CD4-positive, alpha-beta T cell (primary cell): ENCODE measurements at regions of chr7 and their contacts with region 1.

Region 1: GRCh38 chr7:93231799-93232672 is at the start of gene VPS50:
- DNase-seq: peak; percentile 84 to 97 (median 88)
- ATAC-seq: peak; percentile 94
- H3K4me3 ChIP-seq: peak within 1 kb of the TSS; percentile 67
- H3K4me3 Mint-ChIP-seq: peak within 1 kb of the TSS; percentile 96
- H3K27ac ChIP-seq: peak within 1 kb of the TSS; percentile 79 to 91
- H3K27ac Mint-ChIP-seq: peak within 1 kb of the TSS; percentile 95
- H3K4me1 ChIP-seq: peaks cover 6% of the 10 kb centered on the region
- H3K4me1 Mint-ChIP-seq: peaks cover 25% of the 10 kb centered on the region
- H3K27me3 ChIP-seq: no peaks in the 10 kb centered on the region
- H3K27me3 Mint-ChIP-seq: no peaks in the 10 kb centered on the region
- CTCF ChIP-seq: no peak
- total RNA-seq, gene VPS50: 13.2 to 17.3 TPM

Region 2: DNA sequence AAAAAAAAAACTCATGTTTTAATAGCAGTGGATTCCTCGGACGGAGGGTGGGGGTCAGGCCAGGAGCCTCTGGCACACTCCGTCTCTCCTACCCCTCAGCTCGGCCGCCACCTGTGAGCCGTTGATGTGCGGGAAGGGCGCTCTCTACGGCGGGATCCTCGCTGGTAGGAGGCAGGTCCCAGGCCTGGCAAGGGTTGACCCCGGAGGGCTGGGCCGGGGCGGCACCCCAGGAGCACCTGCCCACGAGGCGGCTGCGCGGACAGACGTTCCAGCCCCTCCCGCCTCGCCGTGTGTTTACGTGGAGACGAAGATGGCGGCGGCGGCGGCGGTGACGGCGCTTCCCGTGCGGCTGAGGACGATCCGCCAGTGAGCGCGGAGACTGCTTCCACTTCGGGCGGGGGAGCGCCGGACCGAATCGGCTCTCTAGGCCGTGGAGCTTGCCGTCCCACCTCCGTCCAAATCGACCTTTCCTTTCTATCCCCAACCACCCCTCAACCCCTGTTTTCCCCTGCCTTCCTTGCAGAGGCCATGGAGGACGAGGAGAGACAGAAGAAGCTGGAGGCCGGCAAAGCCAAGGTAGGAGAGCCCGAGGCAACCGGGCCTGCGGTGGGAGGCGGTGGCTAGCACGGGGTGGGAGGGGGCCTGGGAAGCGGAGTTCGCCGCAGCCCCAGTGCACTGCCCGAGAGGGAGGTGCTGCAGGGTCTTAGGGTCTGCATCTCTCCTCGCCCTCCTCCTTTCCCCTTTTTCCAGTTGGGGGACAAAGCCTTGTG is 1291.3 kb before region 1 on chr7 and contains the start of gene AKAP9:
- CTCF ChIA-PET with region 1: no interaction called
- POLR2A ChIA-PET with region 1: no interaction called
- intact Hi-C with region 1: loop called in 1 of 2 experiments (anchors 10 kb)
- DNase-seq: peak; percentile 77 to 94 (median 84)
- ATAC-seq: peak; percentile 88
- H3K4me3 ChIP-seq: peak within 1 kb of the TSS; percentile 96
- H3K4me3 Mint-ChIP-seq: peak within 1 kb of the TSS; percentile 90
- H3K27ac ChIP-seq: peak within 1 kb of the TSS; percentile 82 to 93
- H3K27ac Mint-ChIP-seq: peak within 1 kb of the TSS; percentile 92
- H3K4me1 ChIP-seq: peaks cover 25% of the 10 kb centered on the region
- H3K4me1 Mint-ChIP-seq: peaks cover 49% of the 10 kb centered on the region
- H3K27me3 ChIP-seq: no peaks in the 10 kb centered on the region
- H3K27me3 Mint-ChIP-seq: no peaks in the 10 kb centered on the region
- CTCF ChIP-seq: no peak
- total RNA-seq, gene AKAP9: 62.5 to 64.8 TPM

Region 3: GRCh38 chr7:92528188-92528957 is 703.7 kb before region 1 on chr7 and contains the starts of genes PEX1 and RBM48:
- CTCF ChIA-PET with region 1: no interaction called
- POLR2A ChIA-PET with region 1: interaction called, 23 read pairs
- intact Hi-C with region 1: loop called in 1 of 2 experiments (anchors 5 kb)
- DNase-seq: peak; percentile 89 to 99 (median 94)
- ATAC-seq: peak; percentile 92
- H3K4me3 ChIP-seq: peak within 1 kb of the TSS; percentile 94
- H3K4me3 Mint-ChIP-seq: peak within 1 kb of the TSS; percentile 96
- H3K27ac ChIP-seq: peak within 1 kb of the TSS; percentile 86 to 97
- H3K27ac Mint-ChIP-seq: peak within 1 kb of the TSS; percentile 94
- H3K4me1 ChIP-seq: peaks cover 19% of the 10 kb centered on the region
- H3K4me1 Mint-ChIP-seq: peaks cover 52% of the 10 kb centered on the region
- H3K27me3 ChIP-seq: no peaks in the 10 kb centered on the region
- H3K27me3 Mint-ChIP-seq: no peaks in the 10 kb centered on the region
- CTCF ChIP-seq: peak; percentile 42
- total RNA-seq, gene PEX1: 19.7 to 20.7 TPM
- total RNA-seq, gene RBM48: 45.4 to 47.3 TPM

Region 4: GRCh38 chr7:92584996-92585395 is 647.0 kb before region 1 on chr7:
- CTCF ChIA-PET with region 1: no interaction called
- POLR2A ChIA-PET with region 1: no interaction called
- intact Hi-C with region 1: loop called (anchors 1 to 5 kb)
- DNase-seq: peak in 4 of 14 experiments; percentile 6 to 50 (median 46)
- ATAC-seq: peak; percentile 33
- H3K4me3 ChIP-seq: no peak overlapping the region
- H3K4me3 Mint-ChIP-seq: peak overlapping the region; percentile 48
- H3K27ac ChIP-seq: no peak overlapping the region
- H3K27ac Mint-ChIP-seq: peak overlapping the region; percentile 70
- H3K4me1 ChIP-seq: peaks cover 26% of the 10 kb centered on the region
- H3K4me1 Mint-ChIP-seq: peaks cover 71% of the 10 kb centered on the region
- H3K27me3 ChIP-seq: no peaks in the 10 kb centered on the region
- H3K27me3 Mint-ChIP-seq: no peaks in the 10 kb centered on the region
- CTCF ChIP-seq: no peak

Region 5: DNA sequence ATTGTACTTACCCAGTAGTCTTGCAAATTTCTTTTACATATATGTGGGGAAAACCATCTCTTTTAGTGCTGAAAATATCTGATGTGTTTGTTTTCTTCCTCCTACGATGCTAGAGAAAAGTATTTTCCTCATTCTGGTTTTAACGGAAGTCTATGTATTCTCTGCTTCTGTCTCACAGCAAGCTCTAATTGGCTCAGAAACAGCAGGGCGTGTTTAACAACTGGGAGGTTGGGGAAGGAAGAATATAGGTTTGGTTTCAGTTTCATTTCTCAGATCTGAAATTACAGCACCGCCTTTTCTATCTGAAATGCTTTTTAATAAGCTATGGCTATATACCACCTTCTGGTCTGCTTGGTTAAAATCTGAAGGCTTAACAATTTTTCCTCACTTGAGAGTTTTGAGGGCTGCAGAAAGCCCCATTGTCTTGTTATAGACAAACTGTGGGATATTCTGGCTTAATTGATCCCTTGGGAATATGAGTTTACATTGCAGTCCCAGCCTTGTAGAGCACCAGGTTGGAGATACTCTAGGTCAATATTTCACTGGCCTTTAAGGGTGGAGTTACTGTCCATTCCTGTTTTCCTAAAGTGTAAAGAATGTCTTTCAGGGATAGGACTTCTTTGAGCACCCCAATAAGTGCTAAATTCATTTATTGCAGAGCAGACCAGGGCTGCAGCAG is 114.0 kb before region 1 on chr7 and contains the start of gene SAMD9:
- CTCF ChIA-PET with region 1: interaction called, 3 read pairs
- POLR2A ChIA-PET with region 1: interaction called, 17 read pairs
- intact Hi-C with region 1: loop called (anchors 1 to 2 kb)
- DNase-seq: peak in 13 of 14 experiments; percentile 9 to 93 (median 44)
- ATAC-seq: peak; percentile 99
- H3K4me3 ChIP-seq: peak within 1 kb of the TSS; percentile 64
- H3K4me3 Mint-ChIP-seq: peak within 1 kb of the TSS; percentile 86
- H3K27ac ChIP-seq: peak within 1 kb of the TSS; percentile 55 to 82
- H3K27ac Mint-ChIP-seq: peak within 1 kb of the TSS; percentile 78
- H3K4me1 ChIP-seq: peaks cover 21% of the 10 kb centered on the region
- H3K4me1 Mint-ChIP-seq: peaks cover 53% of the 10 kb centered on the region
- H3K27me3 ChIP-seq: no peaks in the 10 kb centered on the region
- H3K27me3 Mint-ChIP-seq: no peaks in the 10 kb centered on the region
- CTCF ChIP-seq: no peak
- total RNA-seq, gene SAMD9: 19.1 to 21.5 TPM

Region 6: GRCh38 chr7:93185303-93186027 is 46.6 kb before region 1 on chr7:
- CTCF ChIA-PET with region 1: no interaction called
- POLR2A ChIA-PET with region 1: no interaction called
- intact Hi-C with region 1: no loop called
- DNase-seq: no peak
- ATAC-seq: no peak
- H3K4me3 ChIP-seq: no peak overlapping the region
- H3K4me3 Mint-ChIP-seq: no peak overlapping the region
- H3K27ac ChIP-seq: no peak overlapping the region
- H3K27ac Mint-ChIP-seq: no peak overlapping the region
- H3K4me1 ChIP-seq: no peaks in the 10 kb centered on the region
- H3K4me1 Mint-ChIP-seq: no peaks in the 10 kb centered on the region
- H3K27me3 ChIP-seq: peaks cover 3 to 4% of the 10 kb centered on the region in 2 experiments
- H3K27me3 Mint-ChIP-seq: peaks cover 40% of the 10 kb centered on the region
- CTCF ChIP-seq: no peak

Region 7: DNA sequence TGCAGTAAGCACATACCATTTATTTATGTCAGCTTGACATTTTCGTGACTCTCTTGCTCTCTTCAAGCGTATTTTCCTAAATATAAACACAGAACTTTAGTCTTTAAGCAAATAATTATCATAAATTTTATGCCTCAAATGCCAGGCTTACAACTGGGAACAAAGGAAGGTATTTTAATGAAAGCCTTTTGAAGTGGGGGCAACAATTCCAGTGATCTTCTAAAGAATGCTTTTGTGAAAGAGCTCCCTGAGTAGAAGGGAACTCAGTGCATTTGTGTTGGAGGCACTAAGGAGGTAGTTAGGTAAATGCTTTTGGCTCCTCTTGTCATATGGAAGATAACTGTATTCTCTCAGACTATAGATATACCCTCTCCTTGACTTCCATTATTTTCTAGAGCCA is 105.0 kb after region 1 on chr7:
- CTCF ChIA-PET with region 1: no interaction called
- POLR2A ChIA-PET with region 1: no interaction called
- intact Hi-C with region 1: no loop called
- DNase-seq: no peak
- ATAC-seq: no peak
- H3K4me3 ChIP-seq: no peak overlapping the region
- H3K4me3 Mint-ChIP-seq: no peak overlapping the region
- H3K27ac ChIP-seq: no peak overlapping the region
- H3K27ac Mint-ChIP-seq: no peak overlapping the region
- H3K4me1 ChIP-seq: no peaks in the 10 kb centered on the region
- H3K4me1 Mint-ChIP-seq: no peaks in the 10 kb centered on the region
- H3K27me3 ChIP-seq: no peaks in the 10 kb centered on the region
- H3K27me3 Mint-ChIP-seq: no peaks in the 10 kb centered on the region
- CTCF ChIP-seq: no peak

Region 8: GRCh38 chr7:93442478-93443224 is 210.6 kb after region 1 on chr7:
- CTCF ChIA-PET with region 1: no interaction called
- POLR2A ChIA-PET with region 1: no interaction called
- intact Hi-C with region 1: no loop called
- DNase-seq: peak in 8 of 14 experiments; percentile 0 to 46 (median 24)
- ATAC-seq: peak; percentile 44
- H3K4me3 ChIP-seq: no peak overlapping the region
- H3K4me3 Mint-ChIP-seq: no peak overlapping the region
- H3K27ac ChIP-seq: no peak overlapping the region
- H3K27ac Mint-ChIP-seq: no peak overlapping the region
- H3K4me1 ChIP-seq: no peaks in the 10 kb centered on the region
- H3K4me1 Mint-ChIP-seq: no peaks in the 10 kb centered on the region
- H3K27me3 ChIP-seq: no peaks in the 10 kb centered on the region
- H3K27me3 Mint-ChIP-seq: no peaks in the 10 kb centered on the region
- CTCF ChIP-seq: peak; percentile 34

Region 9: DNA sequence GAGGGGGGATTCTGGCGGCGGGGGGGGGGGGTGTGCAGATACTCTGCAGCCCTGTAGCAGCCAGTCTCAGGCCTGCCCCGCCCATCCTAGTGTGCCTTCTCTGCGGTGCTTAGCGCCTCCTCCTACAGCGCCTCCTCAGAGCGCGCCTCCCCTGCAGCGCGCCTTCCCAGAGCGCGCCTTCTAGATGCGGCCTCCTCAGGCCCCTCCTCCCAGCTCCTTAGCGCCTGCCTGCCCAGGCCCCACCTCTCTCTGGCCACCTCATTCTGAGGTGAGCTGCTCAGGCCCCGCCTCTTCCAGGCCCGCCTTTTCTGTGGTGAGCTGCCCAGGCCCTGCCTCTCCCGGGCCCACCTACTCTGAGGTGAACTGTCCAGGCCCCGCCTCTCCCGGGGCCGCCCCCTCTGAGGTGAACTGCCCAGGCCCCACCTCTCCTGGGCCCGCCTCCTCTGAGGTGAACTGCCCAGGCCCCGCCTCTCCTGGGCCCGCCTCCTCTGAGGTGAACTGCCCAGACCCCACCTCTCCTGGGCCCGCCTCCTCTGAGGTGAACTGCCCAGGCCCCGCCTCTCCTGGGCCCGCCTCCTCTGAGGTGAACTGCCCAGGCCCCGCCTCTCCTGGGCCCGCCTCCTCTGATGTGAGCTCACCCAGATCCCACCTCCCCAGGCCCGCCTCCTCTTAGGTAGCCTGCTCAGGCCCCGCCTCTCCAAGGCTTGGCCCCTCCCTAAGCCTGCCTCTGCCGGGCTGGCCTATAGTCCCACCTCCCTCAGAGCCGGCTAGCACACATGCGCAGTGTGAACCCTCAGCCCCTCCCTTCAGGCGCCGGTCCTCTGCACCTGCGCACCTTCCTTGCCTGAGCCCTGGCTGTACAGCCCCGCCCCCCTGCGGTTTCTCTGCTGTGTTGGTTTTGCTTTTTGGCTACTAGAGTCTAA is 1426.0 kb after region 1 on chr7:
- CTCF ChIA-PET with region 1: no interaction called
- POLR2A ChIA-PET with region 1: interaction called, 3 read pairs
- intact Hi-C with region 1: loop called (anchors 5 to 10 kb)
- DNase-seq: peak; percentile 91 to 97 (median 94)
- ATAC-seq: peak; percentile 79
- H3K4me3 ChIP-seq: peak overlapping the region; percentile 63
- H3K4me3 Mint-ChIP-seq: peak overlapping the region; percentile 86
- H3K27ac ChIP-seq: no peak overlapping the region
- H3K27ac Mint-ChIP-seq: peak overlapping the region; percentile 63
- H3K4me1 ChIP-seq: peaks cover 29% of the 10 kb centered on the region
- H3K4me1 Mint-ChIP-seq: peaks cover 21% of the 10 kb centered on the region
- H3K27me3 ChIP-seq: peaks cover 15 to 26% of the 10 kb centered on the region in 2 experiments
- H3K27me3 Mint-ChIP-seq: peaks cover 34% of the 10 kb centered on the region
- CTCF ChIP-seq: no peak

Region 10: DNA sequence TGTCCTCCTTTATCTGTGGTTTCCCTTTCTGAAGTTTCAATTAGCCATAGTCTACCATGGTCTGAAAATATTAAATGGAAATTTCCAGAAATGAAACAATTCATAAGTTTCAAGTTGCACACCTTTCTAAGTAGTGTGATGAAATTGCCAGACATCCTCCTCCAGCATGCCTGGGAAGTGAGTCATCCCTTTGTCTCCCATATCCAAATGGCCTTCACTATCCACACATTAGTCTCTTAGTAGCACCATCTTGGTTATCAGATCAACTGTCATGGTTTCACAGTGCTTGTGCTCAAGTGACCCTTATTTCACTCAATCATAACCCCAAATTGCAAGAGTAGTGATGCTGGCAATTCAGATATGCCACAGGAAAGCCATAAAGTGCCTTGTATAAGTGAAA is 1591.9 kb after region 1 on chr7:
- CTCF ChIA-PET with region 1: no interaction called
- POLR2A ChIA-PET with region 1: no interaction called
- intact Hi-C with region 1: no loop called
- DNase-seq: no peak
- ATAC-seq: no peak
- H3K4me3 ChIP-seq: no peak overlapping the region
- H3K4me3 Mint-ChIP-seq: no peak overlapping the region
- H3K27ac ChIP-seq: no peak overlapping the region
- H3K27ac Mint-ChIP-seq: no peak overlapping the region
- H3K4me1 ChIP-seq: no peaks in the 10 kb centered on the region
- H3K4me1 Mint-ChIP-seq: no peaks in the 10 kb centered on the region
- H3K27me3 ChIP-seq: no peaks in the 10 kb centered on the region
- H3K27me3 Mint-ChIP-seq: no peaks in the 10 kb centered on the region
- CTCF ChIP-seq: no peak